ENCODE measurements at regions of chr12 and their contacts with region 1.

Region 1: DNA sequence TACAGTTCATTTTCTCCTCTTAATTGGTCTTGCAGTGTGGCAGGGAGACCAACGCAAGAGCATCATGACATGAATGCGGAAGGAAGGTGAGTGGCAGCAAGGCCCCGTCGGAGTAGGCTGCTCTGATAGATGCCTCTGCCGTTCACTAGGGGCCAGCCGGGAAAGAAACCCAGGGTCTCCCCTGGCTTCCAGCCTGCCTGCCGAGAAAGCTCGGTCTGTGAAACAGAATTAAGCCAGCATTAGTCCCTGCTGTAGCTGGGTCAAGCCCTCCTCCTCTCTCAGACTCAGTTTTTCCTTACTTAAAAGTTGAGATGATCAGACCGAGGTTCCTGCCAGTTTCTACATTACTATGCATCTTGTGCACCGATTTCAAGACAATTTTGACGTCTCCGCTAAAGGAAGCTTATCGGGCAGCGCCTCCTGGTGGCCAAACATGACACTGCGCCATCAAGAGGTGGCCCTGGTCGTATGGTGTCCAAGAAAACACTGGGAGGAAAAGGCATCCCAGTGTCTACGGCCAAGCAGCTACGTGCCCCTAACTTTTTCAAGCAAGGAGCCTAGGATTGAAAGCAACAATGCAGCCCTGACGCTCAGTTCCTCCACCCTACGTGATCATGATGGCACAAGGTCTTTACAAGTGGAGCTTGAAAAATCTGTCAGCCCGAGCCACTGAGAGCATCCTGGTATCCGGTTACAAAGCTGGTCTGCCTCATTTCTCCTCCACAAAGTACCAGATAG is 131.6 kb downstream of the KSR2 start:
- DNase-seq: peak; percentile 84
- H3K4me3 ChIP-seq: no peak overlapping the region
- H3K27ac ChIP-seq: no peak overlapping the region
- H3K4me1 ChIP-seq: no peaks in the 10 kb centered on the region
- H3K27me3 ChIP-seq: peaks cover 0 to 30% (median 6%) of the 10 kb centered on the region in 3 donors
- CTCF ChIP-seq: peak; percentile 52 to 93 (median 88)
- EP300 ChIP-seq: no peak
- POLR2A ChIP-seq: no peak

Region 2: DNA sequence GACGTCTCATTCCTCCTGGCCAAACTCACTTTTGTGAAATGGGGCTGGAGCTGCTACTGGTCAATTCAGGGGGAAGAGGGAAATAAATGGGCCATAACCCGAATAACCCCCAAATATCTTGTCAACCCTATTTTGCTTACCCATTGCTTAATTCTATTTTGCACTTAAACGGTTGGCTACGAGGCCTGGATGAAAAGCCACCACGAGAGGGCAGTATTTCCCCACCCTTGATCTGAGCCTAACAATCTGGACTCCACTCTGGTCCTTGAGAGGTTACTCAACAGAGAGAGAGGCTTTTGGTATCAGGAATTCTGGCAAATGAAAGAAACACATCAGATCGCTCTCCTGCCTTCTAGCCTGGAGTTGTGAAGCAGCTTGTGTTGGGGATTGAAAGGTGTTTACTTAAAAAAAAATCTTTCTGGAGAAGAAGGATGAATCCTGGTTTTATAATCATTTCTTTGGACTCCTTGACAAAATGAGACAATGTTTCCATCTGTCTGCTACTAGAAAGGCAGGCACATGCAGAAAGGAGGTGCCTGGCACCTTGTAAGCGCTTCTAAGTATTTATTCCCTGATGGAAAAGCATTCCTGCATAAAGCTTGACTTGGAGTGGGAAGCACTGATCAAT is 624.5 kb before region 1 on chr12:
- intact Hi-C with region 1: loop called (anchors 1 kb)
- DNase-seq: peak; percentile 81
- H3K4me3 ChIP-seq: no peak overlapping the region
- H3K27ac ChIP-seq: no peak overlapping the region
- H3K4me1 ChIP-seq: no peaks in the 10 kb centered on the region
- H3K27me3 ChIP-seq: peaks cover 0 to 5% (median 0%) of the 10 kb centered on the region in 3 donors
- CTCF ChIP-seq: peak; percentile 28 to 80 (median 60)
- EP300 ChIP-seq: no peak
- POLR2A ChIP-seq: no peak

Region 3: DNA sequence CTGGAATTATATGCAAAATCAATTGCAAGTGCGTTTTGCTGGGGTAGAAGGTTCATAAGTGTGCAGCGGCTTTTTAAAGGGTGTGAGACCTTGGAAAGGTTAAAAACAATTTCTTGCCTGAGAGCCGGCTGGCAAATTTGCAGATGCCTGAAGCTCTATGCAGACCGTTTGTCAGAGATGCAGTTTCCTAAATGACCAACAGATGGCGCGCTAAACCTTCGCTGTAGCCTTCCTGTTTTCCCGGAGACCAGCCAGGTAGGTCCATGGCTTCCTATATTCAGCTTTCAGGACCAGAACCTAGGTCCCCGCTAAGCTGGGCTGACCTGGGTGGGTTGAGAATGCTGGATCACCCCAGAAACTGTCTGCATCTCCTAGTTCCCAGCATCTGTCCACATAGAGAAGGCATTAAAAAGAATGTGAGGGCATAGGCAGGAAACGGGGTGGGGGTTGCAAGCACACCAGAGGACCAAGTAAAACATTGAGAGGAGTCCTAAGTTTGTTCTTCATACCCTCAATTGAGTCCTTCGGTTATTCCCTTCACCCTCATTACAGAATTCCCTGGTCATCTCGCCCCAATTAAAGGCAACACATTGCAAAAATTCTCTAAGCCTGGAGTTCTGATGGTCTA is 470.0 kb before region 1 on chr12:
- intact Hi-C with region 1: loop called (anchors 1 kb)
- DNase-seq: peak; percentile 74
- H3K4me3 ChIP-seq: no peak overlapping the region
- H3K27ac ChIP-seq: no peak overlapping the region
- H3K4me1 ChIP-seq: no peaks in the 10 kb centered on the region
- H3K27me3 ChIP-seq: peaks cover 5 to 53% (median 6%) of the 10 kb centered on the region in 3 donors
- CTCF ChIP-seq: peak; percentile 28 to 87 (median 80)
- EP300 ChIP-seq: no peak
- POLR2A ChIP-seq: no peak

Region 4: GRCh38 chr12:117897372-117898161 is 60.4 kb after region 1 on chr12:
- intact Hi-C with region 1: no loop called
- DNase-seq: no peak
- H3K4me3 ChIP-seq: no peak overlapping the region
- H3K27ac ChIP-seq: no peak overlapping the region
- H3K4me1 ChIP-seq: no peaks in the 10 kb centered on the region
- H3K27me3 ChIP-seq: no peaks in the 10 kb centered on the region
- CTCF ChIP-seq: no peak
- EP300 ChIP-seq: no peak
- POLR2A ChIP-seq: no peak